PC-3 (cell line): ENCODE measurements at regions of chr12 and their contacts with region 1.

Region 1: GRCh38 chr12:104951759-104952509 is 6.2 kb downstream of the SLC41A2 start:
- DNase-seq: peak; percentile 80
- ATAC-seq: peak; percentile 95
- H3K4me3 ChIP-seq: no peak overlapping the region
- H3K27ac ChIP-seq: no peak overlapping the region
- H3K4me1 ChIP-seq: peaks cover 33% of the 10 kb centered on the region
- H3K27me3 ChIP-seq: no peaks in the 10 kb centered on the region
- CTCF ChIP-seq: no peak

Region 2: DNA sequence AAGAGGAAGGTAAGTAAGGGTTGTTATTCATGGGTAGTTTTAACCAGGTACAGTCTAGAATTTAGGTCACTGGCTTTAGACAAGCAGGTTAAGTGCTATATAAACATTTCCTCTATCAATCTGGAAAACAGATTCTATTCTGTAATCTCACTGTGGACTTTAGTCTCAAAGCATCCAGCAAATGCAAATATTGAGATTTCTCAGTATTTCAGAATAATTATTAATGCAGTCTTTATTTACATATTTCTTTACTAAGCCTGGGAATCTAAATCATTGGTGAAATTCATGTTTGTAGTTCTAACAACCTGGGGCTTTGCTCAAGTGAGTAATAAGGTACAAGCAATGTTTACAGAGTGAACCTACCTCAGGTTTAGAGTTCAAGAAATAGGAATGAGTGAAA is 55.8 kb before region 1 on chr12:
- CTCF ChIA-PET with region 1: no interaction called
- POLR2A ChIA-PET with region 1: no interaction called
- intact Hi-C with region 1: loop called (anchors 5 kb)
- DNase-seq: peak; percentile 62
- ATAC-seq: peak; percentile 70
- H3K4me3 ChIP-seq: peak overlapping the region; percentile 13; the same call in 1 of the 2 replicates
- H3K27ac ChIP-seq: peak overlapping the region; percentile 92
- H3K4me1 ChIP-seq: peaks cover 26% of the 10 kb centered on the region
- H3K27me3 ChIP-seq: no peaks in the 10 kb centered on the region
- CTCF ChIP-seq: no peak